AG04449 (cell line): ENCODE measurements at regions of chr12 and their contacts with region 1.

Region 1: DNA sequence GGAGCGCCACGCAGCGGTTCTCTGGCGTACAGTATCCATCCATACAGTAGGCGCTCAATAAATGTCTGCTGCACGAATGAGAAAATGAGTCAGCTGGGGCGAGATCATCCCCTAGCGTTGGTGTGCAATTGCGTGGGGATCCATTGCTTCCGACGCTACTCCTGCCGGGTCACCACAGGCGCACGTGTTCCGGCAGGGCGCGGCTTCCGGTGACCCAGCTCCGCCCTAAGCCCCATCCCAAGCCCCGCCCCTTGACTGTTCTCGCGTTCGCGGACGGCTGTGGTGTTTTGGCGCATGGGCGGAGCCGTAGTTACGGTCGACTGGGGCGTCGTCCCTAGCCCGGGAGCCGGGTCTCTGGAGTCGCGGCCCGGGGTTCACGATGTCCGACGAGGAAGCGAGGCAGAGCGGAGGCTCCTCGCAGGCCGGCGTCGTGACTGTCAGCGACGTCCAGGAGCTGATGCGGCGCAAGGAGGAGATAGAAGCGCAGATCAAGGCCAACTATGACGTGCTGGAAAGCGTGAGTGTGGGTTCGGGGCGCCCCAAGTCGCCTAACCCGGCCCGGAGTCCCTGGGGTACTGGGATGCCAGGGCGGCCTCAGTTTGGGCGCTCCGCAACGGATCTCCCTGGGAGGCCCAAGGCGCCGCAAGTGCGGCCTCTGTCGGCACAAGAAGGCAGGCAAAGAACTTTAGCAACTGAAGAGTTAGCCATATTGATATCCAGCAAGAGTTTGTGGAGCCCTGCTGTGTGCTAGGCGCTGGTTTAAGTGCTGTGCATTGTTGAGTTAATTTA is at the start of gene PSMD9:
- DNase-seq: peak; percentile 79
- H3K4me3 ChIP-seq: peak within 1 kb of the TSS; percentile 99
- CTCF ChIP-seq: peak; percentile 80

Region 2: DNA sequence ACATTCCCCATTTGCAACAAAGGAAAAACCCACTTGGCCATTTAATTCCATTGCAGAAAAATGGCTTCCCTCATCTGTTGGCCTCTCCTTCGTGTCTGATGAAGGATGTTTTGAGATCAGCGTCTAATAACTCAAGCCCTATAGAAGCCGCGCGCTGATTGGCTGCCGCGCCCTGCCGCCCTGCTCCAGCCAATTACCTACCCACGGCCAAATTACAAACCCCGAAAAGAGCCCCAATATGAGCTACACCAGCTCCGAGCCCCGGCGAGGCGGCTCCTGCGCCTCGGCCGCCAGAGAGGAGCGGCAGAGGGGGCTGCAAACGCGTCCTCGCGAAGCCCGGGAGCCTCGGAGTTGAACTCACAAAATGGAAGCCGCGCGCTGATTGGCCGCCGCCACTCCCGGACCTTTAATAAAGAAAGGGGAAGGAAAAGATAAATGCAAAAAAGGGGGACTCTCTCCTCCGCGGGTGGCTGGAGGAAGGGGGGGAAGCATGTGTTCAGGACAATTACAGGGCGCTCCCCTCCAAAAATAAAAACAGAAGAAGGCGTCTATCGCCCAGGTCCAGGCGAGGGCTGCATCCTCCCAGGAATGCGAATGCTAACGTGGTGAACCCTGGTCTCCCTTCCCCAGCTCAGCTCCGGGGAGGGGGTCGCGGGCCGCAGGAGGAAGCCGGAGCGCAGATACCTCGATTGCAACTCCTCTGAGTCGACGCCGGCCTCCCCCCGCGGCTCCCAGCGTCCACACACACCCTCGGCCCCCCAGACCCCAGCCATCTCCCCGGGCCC is 85.6 kb before region 1 on chr12:
- CTCF ChIA-PET with region 1: interaction called, 230 read pairs
- POLR2A ChIA-PET with region 1: interaction called, 12 read pairs
- DNase-seq: peak; percentile 81
- H3K4me3 ChIP-seq: peak overlapping the region; percentile 69
- CTCF ChIP-seq: no peak

Region 3: GRCh38 chr12:121872546-121873215 is 16.0 kb before region 1 on chr12:
- CTCF ChIA-PET with region 1: interaction called, 15 read pairs
- POLR2A ChIA-PET with region 1: interaction called, 10 read pairs
- DNase-seq: peak; percentile 87
- H3K4me3 ChIP-seq: peak overlapping the region; percentile 23; the same call in 1 of the 2 replicates
- CTCF ChIP-seq: no peak